Activated CD8-positive, alpha-beta T cell treated with anti-CD3 and anti-CD28 coated beads for 36 hours (primary cell): ENCODE measurements at regions of chr14 and their contacts with region 1.

Region 1: DNA sequence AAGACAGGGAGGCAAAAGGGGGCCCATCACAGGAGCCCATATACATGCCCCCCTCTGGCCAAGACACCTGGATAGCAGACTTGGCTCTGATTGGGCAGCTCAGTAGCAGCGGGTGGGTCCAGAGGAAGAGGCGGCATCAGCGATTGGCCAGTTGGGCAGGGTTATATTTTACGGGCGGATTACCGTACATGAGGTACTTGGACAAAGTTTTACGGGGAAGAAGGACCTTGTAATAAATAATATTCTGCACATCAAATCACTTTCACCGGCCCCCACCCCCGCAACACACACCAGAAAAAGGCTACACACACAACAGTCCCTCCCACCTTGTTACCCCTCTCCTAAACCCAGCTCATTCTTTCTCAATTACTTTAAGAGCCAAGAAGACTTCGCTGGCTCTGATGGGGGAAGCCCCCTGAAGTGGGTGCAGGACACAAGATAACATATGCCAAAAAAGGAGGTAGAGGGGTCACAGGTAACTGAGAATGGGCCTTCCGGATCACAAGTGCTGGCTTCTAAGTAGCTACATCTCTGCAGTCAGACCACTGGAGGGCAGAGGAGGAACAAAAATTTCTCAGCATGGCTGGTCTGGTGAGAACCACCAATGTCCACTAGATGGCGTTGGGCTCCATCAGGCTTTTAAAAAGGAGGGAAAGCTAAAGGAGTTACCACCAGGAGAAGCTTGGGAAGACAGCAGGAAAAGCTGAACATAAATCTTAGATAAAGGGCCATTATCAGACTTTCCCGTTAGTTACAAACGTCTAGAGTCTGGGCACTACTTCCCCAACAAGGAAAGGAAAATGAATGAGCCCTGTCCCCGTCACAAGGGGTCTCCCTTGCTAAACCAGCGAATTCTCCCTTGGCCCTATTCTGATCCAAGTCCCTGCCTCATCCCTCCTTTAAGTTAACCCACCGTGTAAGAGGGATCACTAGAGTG is 11.4 kb upstream of the CDH24 start:
- DNase-seq: peak; percentile 84
- ATAC-seq: peak; percentile 79
- H3K4me3 Mint-ChIP-seq: peak overlapping the region; percentile 47
- H3K27ac Mint-ChIP-seq: peak overlapping the region; percentile 69
- H3K4me1 Mint-ChIP-seq: peaks cover 36% of the 10 kb centered on the region
- H3K27me3 Mint-ChIP-seq: no peaks in the 10 kb centered on the region
- CTCF ChIP-seq: peak; percentile 96

Region 2: DNA sequence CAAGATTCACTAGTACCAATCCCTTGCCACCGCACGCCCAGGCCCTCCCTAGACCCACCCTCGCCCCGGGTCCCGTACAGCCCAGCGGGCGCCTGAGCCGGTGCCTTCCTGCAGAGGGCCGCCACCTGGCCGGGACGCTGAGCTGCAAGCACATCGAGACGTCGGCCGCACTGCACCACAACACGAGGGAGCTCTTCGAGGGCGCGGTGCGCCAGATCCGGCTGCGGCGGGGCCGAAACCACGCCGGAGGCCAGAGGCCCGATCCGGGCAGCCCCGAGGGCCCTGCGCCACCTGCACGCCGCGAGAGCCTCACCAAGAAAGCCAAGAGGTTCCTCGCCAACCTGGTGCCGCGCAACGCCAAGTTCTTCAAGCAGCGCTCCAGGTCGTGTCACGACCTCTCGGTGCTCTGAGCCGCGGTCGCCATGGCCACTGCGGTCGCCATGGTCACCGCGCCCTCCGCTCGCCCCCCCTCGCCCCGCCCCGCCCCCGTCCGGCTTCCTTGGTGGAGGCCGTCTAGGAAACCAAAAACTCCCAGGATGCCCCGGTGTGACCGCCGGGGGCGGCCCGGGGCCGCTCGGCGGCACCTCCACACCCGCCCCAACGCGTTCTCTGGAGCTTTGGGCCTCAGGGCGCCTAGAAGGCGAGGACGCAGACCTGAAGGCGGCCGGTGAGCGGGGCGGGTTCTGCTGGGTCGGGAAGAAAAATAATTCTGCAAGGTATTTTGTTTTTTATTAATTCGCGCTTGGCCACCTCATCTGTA is 182.1 kb before region 1 on chr14:
- CTCF ChIA-PET with region 1: interaction called, 11 read pairs
- POLR2A ChIA-PET with region 1: no interaction called
- intact Hi-C with region 1: no loop called
- DNase-seq: peak; percentile 81
- ATAC-seq: peak; percentile 71
- H3K4me3 Mint-ChIP-seq: peak overlapping the region; percentile 70
- H3K27ac Mint-ChIP-seq: peak overlapping the region; percentile 77
- H3K4me1 Mint-ChIP-seq: peaks cover 38% of the 10 kb centered on the region
- H3K27me3 Mint-ChIP-seq: peaks cover 1% of the 10 kb centered on the region
- CTCF ChIP-seq: peak; percentile 35

Region 3: DNA sequence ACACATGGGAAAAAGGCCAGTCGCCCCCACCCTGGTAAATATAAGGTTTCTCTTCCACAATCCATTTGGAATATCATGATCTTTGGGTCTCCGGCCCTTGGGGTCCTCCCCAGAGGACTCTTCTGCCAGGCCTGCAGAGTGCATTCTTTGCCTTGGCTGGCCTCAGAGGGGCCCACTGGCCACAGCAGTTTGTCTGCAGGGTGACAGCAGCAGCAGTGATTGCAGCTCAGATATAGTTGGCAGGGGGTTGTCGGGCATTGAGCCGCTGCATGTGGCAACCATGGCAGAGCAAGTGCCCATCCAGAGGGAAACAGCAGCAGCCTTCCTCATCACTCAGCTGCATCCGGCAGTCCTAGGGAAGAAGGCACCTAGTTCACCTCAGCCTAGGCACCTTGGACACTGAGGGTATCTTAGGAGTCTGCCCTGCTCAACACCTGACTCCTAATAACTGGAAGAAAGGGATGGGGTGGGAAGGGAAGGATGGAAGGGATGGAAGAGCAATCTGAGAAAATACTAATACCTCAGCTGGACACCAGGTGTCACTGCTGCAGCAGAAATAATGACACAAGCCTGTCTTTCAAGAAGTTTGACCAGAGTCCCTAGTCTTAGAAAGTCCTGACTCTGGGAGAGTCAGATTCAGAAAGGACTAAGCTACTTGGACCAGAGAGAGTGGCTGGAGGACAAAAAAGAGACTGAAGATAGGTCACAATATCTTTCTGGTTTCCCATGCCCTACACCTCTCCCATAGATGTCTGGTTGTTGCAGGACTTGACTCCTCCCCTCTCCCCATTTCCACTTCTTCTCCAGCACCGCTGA is 95.3 kb before region 1 on chr14:
- CTCF ChIA-PET with region 1: interaction called, 201 read pairs
- POLR2A ChIA-PET with region 1: no interaction called
- intact Hi-C with region 1: no loop called
- DNase-seq: peak; percentile 56
- ATAC-seq: peak; percentile 69
- H3K4me3 Mint-ChIP-seq: no peak overlapping the region
- H3K27ac Mint-ChIP-seq: no peak overlapping the region
- H3K4me1 Mint-ChIP-seq: no peaks in the 10 kb centered on the region
- H3K27me3 Mint-ChIP-seq: no peaks in the 10 kb centered on the region
- CTCF ChIP-seq: peak; percentile 80

Region 4: GRCh38 chr14:23000860-23001259 is 67.9 kb before region 1 on chr14:
- CTCF ChIA-PET with region 1: interaction called, 289 read pairs
- POLR2A ChIA-PET with region 1: interaction called, 6 read pairs
- intact Hi-C with region 1: no loop called
- DNase-seq: no peak
- ATAC-seq: peak; percentile 47
- H3K4me3 Mint-ChIP-seq: no peak overlapping the region
- H3K27ac Mint-ChIP-seq: no peak overlapping the region
- H3K4me1 Mint-ChIP-seq: peaks cover 10% of the 10 kb centered on the region
- H3K27me3 Mint-ChIP-seq: no peaks in the 10 kb centered on the region
- CTCF ChIP-seq: no peak

Region 5: DNA sequence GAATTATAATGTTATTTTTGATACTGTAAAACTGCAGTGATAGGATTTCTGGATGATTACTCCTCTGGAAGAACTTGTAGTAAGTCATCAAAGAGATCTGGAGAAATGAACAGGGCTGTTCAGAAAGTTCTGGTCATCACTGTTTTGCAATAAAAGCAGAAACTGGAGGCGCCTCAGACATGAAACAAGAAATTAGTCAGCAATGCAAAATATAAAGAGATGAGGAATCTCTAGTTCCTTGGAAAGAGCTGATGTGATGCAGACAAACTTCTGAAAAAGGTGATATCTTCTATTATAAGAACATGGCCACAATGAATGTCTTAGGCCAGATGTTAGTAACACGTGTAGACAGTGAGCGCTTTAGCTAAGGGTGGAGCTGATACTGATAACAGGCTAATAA is 16.7 kb after region 1 on chr14:
- CTCF ChIA-PET with region 1: interaction called, 70 read pairs
- POLR2A ChIA-PET with region 1: interaction called, 8 read pairs
- intact Hi-C with region 1: no loop called
- DNase-seq: no peak
- ATAC-seq: peak; percentile 30
- H3K4me3 Mint-ChIP-seq: no peak overlapping the region
- H3K27ac Mint-ChIP-seq: peak overlapping the region; percentile 75
- H3K4me1 Mint-ChIP-seq: peaks cover 32% of the 10 kb centered on the region
- H3K27me3 Mint-ChIP-seq: no peaks in the 10 kb centered on the region
- CTCF ChIP-seq: no peak

Region 6: GRCh38 chr14:23114669-23115491 is 46.1 kb after region 1 on chr14:
- CTCF ChIA-PET with region 1: interaction called, 29 read pairs
- POLR2A ChIA-PET with region 1: interaction called, 5 read pairs
- intact Hi-C with region 1: no loop called
- DNase-seq: no peak
- ATAC-seq: no peak
- H3K4me3 Mint-ChIP-seq: no peak overlapping the region
- H3K27ac Mint-ChIP-seq: no peak overlapping the region
- H3K4me1 Mint-ChIP-seq: peaks cover 30% of the 10 kb centered on the region
- H3K27me3 Mint-ChIP-seq: no peaks in the 10 kb centered on the region
- CTCF ChIP-seq: no peak